Heart left ventricle (tissue), 16 donors: ENCODE measurements at regions of chr18 and their contacts with region 1.

Region 1: DNA sequence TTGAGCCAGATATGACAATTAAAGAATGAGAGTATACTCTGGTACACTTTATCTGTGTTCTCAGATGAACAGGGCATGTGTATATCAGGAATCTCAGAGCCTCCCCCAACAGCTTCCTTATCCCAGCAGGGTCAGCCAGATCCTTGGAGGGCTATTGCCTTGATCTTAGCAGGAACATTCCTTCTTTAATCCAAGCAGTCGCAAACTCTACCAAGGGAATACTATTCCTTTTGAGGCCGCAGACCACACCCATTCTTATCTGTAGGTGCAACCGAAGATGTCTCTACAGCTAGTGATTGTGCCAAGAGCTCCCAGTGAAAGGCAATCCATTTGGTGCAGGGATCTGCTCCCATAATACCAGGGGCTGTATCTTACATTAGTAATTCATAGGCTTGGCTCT is 118.3 kb upstream of the DOK6 start:
- DNase-seq: no peak
- ATAC-seq: no peak
- H3K4me3 ChIP-seq: no peak overlapping the region
- H3K27ac ChIP-seq: no peak overlapping the region
- H3K4me1 ChIP-seq: no peaks in the 10 kb centered on the region
- H3K27me3 ChIP-seq: no peaks in the 10 kb centered on the region
- CTCF ChIP-seq: no peak
- POLR2A ChIP-seq: no peak

Region 2: GRCh38 chr18:69300185-69300584 is 17.8 kb after region 1 on chr18:
- intact Hi-C with region 1: no loop called
- DNase-seq: no peak
- ATAC-seq: no peak
- H3K4me3 ChIP-seq: no peak overlapping the region
- H3K27ac ChIP-seq: no peak overlapping the region
- H3K4me1 ChIP-seq: no peaks in the 10 kb centered on the region
- H3K27me3 ChIP-seq: no peaks in the 10 kb centered on the region
- CTCF ChIP-seq: no peak
- POLR2A ChIP-seq: no peak

Region 3: DNA sequence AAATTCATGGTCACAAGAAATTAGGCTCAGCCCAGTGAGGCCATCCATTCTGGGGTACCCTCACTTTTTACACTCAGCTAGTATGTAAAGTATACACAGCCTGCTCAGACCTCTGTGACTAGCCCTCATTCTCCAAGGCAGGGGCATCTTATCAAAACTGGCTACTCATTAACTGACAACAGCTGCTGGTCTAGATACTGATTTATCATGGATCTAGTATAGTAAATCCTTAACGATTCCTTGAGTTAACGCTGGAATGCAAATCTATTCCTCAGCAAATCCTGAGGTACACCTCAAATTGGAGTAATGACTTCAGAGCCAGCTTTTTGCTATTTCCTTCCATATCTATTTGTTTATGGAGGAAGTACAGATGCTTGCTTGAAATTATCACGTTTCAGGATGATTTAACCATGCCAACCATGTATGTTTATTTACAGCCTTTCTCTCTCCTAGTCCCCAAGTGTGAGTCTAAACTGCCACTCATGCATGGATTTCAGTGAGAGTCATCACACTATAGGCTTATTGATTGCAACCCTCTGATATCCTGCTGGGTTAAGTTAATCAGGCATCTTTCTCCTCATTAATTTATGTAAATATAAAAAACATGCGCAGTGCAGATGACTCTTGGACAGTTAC is 48.1 kb after region 1 on chr18:
- intact Hi-C with region 1: loop called in 1 of 10 experiments (anchors 5 kb)
- DNase-seq: no peak
- ATAC-seq: no peak
- H3K4me3 ChIP-seq: no peak overlapping the region
- H3K27ac ChIP-seq: no peak overlapping the region
- H3K4me1 ChIP-seq: no peaks in the 10 kb centered on the region
- H3K27me3 ChIP-seq: no peaks in the 10 kb centered on the region
- CTCF ChIP-seq: no peak
- POLR2A ChIP-seq: no peak

Region 4: DNA sequence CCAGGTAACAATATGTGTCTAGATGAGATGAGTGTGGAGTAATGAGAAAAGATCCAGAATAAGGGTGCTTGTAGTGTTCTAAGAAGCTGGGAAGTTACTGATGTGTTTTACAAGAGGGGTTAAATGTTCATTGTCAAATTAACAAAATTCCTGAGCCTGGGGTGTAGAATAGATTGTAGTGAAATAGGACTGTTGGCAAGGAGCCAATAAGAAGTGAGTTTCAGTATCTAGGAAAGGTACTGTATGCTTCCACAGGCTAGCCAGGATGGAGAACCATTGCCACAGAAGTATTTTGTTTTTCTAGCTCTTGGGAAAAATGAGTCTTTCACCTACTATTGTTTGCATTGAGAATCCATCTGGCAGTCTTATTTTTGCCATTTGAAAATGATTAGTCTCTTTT is 128.8 kb after region 1 on chr18:
- intact Hi-C with region 1: no loop called
- DNase-seq: no peak
- ATAC-seq: no peak
- H3K4me3 ChIP-seq: no peak overlapping the region
- H3K27ac ChIP-seq: no peak overlapping the region
- H3K4me1 ChIP-seq: no peaks in the 10 kb centered on the region
- H3K27me3 ChIP-seq: no peaks in the 10 kb centered on the region
- CTCF ChIP-seq: no peak
- POLR2A ChIP-seq: no peak